ENCODE measurements at regions of chr1 and their contacts with region 1.

Region 1: GRCh38 chr1:27632387-27633297 is 2.3 kb downstream of the FGR start:
- DNase-seq: no peak
- H3K4me3 ChIP-seq: no peak overlapping the region
- H3K27ac ChIP-seq: no peak overlapping the region
- H3K4me1 ChIP-seq: peaks cover 20% of the 10 kb centered on the region
- H3K27me3 ChIP-seq: no peaks in the 10 kb centered on the region
- CTCF ChIP-seq: no peak

Region 2: GRCh38 chr1:27489910-27490741 is 142.5 kb before region 1 on chr1 and contains the start of gene WASF2:
- CTCF ChIA-PET with region 1: no interaction called
- dilution Hi-C with region 1: no loop called
- in situ Hi-C with region 1: no loop called
- intact Hi-C with region 1: no loop called
- DNase-seq: peak; percentile 95
- H3K4me3 ChIP-seq: peak within 1 kb of the TSS; percentile 63 to 94 (median 94)
- H3K27ac ChIP-seq: peak within 1 kb of the TSS; percentile 97
- H3K4me1 ChIP-seq: peaks cover 18% of the 10 kb centered on the region
- H3K27me3 ChIP-seq: no peaks in the 10 kb centered on the region
- CTCF ChIP-seq: no peak
- total RNA-seq, gene WASF2: 32.2 to 138 TPM

Region 3: DNA sequence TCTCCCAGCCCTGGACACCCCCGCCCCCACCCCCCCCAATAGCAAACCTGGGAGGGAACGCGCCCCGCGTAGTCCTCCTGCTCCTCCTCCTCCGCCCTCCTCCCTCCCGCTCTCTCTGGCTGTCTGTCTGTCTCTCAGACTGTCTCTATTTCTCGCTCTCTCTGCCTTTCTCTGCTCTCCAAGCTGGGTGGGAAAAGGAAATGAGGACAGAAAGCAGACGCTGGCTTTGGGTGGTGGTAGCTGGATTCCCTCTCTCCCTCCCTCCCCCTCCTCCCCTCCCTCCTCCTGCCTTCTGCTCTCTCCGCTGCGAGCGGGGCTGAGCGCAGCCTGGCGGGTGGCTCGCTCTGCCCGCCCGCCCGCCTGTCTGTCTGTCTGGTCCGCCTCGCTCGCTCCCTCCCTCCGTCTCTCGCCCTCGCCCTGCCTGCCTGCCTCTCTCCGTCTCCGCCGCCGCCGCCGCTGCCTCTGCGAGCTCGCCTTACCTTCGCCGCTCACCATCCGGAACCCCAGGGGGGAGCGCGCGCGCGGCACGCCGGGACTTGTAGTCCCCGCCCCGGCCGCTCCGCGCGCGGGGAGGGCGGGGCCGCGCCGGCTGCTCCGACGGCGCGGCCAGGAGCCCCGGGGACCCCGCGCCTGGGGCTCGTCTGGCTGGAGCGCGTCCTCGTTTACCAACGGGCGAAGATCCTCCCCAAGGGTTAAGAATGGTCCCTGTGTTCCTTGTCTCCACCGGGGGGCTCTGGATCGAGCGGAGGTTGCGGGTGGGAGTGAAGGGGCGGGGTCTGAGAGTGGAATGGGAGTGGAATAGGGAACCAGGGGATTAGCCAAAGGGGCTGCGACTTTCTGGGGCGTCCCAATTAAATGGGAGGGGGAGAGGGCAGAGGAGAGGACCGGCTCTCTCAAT is 28.7 kb before region 1 on chr1 and contains the start of gene AHDC1:
- CTCF ChIA-PET with region 1: no interaction called
- dilution Hi-C with region 1: no loop called
- in situ Hi-C with region 1: no loop called
- intact Hi-C with region 1: no loop called
- DNase-seq: peak; percentile 89
- H3K4me3 ChIP-seq: peak within 1 kb of the TSS; percentile 77 to 93 (median 78)
- H3K27ac ChIP-seq: peak within 1 kb of the TSS; percentile 33
- H3K4me1 ChIP-seq: peaks cover 44% of the 10 kb centered on the region
- H3K27me3 ChIP-seq: no peaks in the 10 kb centered on the region
- CTCF ChIP-seq: peak in 1 of 2 donors; percentile 14
- total RNA-seq, gene AHDC1: 35.3 to 51.8 TPM

Region 4: DNA sequence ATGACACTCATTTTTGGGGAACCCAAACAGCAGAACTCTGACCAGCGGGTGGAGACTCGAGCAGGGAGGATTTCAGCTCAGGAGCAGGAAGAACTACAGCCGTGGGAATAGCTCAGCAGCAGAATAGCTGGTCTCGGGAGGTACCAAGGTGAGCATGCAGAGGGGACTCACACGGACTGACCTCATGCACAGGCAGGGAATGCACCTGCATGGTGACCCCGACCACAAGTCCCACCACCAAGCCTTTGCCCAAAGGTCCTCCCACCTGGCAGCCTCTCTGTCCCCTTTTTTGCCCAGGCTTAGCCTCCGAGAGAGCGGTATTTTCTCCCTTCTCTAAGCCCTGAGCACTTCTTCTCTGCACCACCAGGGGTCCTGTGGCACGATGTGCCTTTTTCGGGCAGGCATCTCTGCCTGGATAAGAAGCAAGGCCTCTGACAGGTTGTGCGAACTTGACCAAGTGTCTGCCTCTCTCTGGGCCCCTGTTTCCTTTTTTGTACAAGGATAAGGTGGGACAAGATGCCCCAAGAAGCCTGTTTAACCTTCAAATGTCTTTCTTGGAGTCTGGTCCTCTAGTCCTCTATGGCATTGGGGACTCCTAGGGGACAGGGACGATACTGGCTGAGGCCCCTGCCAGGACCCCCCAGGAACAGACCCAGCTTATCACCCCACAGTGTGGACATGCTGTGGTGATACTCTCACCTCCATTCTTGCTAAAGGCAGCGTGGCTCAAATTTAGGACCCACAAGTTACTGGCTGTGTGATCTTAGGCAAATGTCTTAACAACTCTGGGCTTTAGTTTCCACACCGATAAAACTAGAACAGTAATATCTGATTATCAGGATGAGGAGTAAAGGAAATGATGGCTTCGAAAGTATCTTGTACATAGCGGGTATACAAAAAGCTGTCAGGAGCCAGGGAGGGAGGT is 11.3 kb after region 1 on chr1:
- CTCF ChIA-PET with region 1: interaction called, 14 read pairs
- dilution Hi-C with region 1: no loop called
- in situ Hi-C with region 1: no loop called
- intact Hi-C with region 1: no loop called
- DNase-seq: peak; percentile 46
- H3K4me3 ChIP-seq: no peak overlapping the region
- H3K27ac ChIP-seq: no peak overlapping the region
- H3K4me1 ChIP-seq: no peaks in the 10 kb centered on the region
- H3K27me3 ChIP-seq: no peaks in the 10 kb centered on the region
- CTCF ChIP-seq: peak; percentile 72 to 79

Region 5: DNA sequence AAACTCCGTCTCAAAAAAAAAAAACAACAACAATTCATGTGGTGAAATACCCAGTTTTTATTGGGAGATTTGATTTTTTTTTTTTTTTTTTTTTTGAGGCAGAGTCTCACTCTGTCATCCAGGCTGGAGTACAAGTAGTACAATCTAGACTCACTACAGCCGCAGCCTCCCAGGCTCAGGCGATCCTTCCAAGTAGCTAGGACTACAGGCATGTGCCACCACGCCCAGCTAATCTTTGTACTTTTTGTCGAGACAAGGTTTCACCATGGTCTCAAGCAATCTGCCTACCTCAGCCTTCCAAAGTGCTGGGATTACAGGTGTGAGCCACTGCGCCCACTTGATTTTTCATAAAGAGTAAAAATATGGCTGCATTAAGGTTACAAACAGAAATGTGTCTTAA is 108.5 kb after region 1 on chr1:
- CTCF ChIA-PET with region 1: no interaction called
- dilution Hi-C with region 1: no loop called
- in situ Hi-C with region 1: no loop called
- intact Hi-C with region 1: no loop called
- DNase-seq: no peak
- H3K4me3 ChIP-seq: no peak overlapping the region
- H3K27ac ChIP-seq: no peak overlapping the region
- H3K4me1 ChIP-seq: no peaks in the 10 kb centered on the region
- H3K27me3 ChIP-seq: no peaks in the 10 kb centered on the region
- CTCF ChIP-seq: no peak

Region 6: GRCh38 chr1:27952147-27952546 is 319.5 kb after region 1 on chr1:
- CTCF ChIA-PET with region 1: no interaction called
- dilution Hi-C with region 1: no loop called
- in situ Hi-C with region 1: no loop called
- intact Hi-C with region 1: no loop called
- DNase-seq: no peak
- H3K4me3 ChIP-seq: no peak overlapping the region
- H3K27ac ChIP-seq: no peak overlapping the region
- H3K4me1 ChIP-seq: no peaks in the 10 kb centered on the region
- H3K27me3 ChIP-seq: no peaks in the 10 kb centered on the region
- CTCF ChIP-seq: no peak

Measured in mammary epithelial cell (primary cell).